ENCODE measurements at regions of chr1 and their contacts with region 1.

Region 1: GRCh38 chr1:42173155-42173933 is 8.8 kb upstream of the GUCA2A start:
- DNase-seq: peak; percentile 35
- H3K4me3 ChIP-seq: peak overlapping the region in 2 of 3 experiments; percentile 0 to 7
- H3K27ac ChIP-seq: peak overlapping the region; percentile 66
- H3K4me1 ChIP-seq: peaks cover 56% of the 10 kb centered on the region
- H3K27me3 ChIP-seq: no peaks in the 10 kb centered on the region
- CTCF ChIP-seq: peak; percentile 96 to 99

Region 2: GRCh38 chr1:41516168-41517061 is 656.9 kb before region 1 on chr1:
- CTCF ChIA-PET with region 1: no interaction called
- dilution Hi-C with region 1: no loop called
- in situ Hi-C with region 1: no loop called
- intact Hi-C with region 1: loop called (anchors 5 kb)
- DNase-seq: peak; percentile 71
- H3K4me3 ChIP-seq: peak overlapping the region in 2 of 3 experiments; percentile 18 to 38
- H3K27ac ChIP-seq: no peak overlapping the region
- H3K4me1 ChIP-seq: peaks cover 23% of the 10 kb centered on the region
- H3K27me3 ChIP-seq: no peaks in the 10 kb centered on the region
- CTCF ChIP-seq: peak; percentile 69 to 91

Region 3: GRCh38 chr1:41812051-41812450 is 361.3 kb before region 1 on chr1:
- CTCF ChIA-PET with region 1: interaction called, 4 read pairs
- dilution Hi-C with region 1: no loop called
- in situ Hi-C with region 1: no loop called
- intact Hi-C with region 1: loop called (anchors 1 kb)
- DNase-seq: peak; percentile 59
- H3K4me3 ChIP-seq: no peak overlapping the region
- H3K27ac ChIP-seq: no peak overlapping the region
- H3K4me1 ChIP-seq: peaks cover 3% of the 10 kb centered on the region
- H3K27me3 ChIP-seq: no peaks in the 10 kb centered on the region
- CTCF ChIP-seq: peak; percentile 77 to 82

Region 4: DNA sequence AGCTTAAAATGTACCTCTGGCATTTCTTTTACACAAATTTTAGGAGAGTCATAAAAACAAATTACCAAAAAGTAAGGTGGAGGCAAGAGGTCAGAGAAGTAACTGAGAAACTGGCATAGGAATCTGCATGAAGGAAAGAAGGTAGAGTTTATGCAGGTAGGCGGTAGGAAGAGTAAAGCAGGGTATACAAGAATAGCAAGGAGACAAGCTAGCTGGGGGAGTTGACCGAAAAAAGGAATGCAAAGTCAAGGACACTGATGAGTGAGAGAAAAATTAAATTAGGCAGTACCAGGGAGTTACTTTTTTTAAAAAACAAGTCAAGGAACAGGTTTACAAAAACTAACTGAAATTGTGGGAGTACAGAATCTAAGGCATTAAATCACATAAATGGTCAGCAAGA is 105.7 kb after region 1 on chr1:
- CTCF ChIA-PET with region 1: no interaction called
- dilution Hi-C with region 1: loop called (anchors 5 kb)
- in situ Hi-C with region 1: no loop called
- intact Hi-C with region 1: no loop called
- DNase-seq: no peak
- H3K4me3 ChIP-seq: no peak overlapping the region
- H3K27ac ChIP-seq: no peak overlapping the region
- H3K4me1 ChIP-seq: peaks cover 14% of the 10 kb centered on the region
- H3K27me3 ChIP-seq: no peaks in the 10 kb centered on the region
- CTCF ChIP-seq: no peak

Region 5: DNA sequence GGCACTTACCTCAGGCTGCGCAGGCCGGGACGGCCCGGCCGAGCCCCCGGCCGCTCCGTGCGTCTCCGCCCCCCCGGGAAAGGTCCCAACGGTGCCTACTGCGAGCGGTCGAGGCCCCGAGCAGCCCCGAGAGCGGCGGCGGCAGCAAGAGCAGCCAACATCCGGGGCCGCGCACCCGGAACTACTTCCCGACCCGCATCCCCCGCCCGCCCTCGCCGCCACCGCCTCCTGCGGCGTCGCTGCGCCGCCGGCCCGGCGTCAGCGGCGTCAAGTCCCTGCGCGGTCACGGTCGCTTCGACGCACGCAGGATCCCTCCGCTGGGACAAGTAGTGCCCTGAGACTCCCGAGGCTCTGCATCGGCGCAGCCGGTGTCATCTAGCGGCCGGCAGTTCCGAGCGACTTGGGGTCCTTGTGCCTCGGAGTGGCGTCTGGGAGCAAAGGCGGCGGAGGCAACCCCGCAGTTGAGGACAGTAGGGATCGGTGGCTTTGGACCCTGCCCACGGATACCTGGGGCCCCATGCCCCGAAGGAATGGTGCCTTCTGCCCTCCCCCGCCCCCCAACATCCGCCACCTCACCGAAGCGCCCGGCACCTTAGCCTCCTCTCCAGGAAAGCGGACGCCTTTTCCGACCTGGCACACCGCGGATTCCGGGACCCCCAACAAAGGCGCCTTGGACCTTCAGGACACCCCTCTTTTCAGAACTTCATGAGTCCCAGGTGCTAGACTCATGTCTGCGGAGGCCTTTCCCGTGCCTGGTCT is 161.9 kb after region 1 on chr1 and contains the start of gene FOXJ3:
- CTCF ChIA-PET with region 1: interaction called, 3 read pairs
- dilution Hi-C with region 1: no loop called
- in situ Hi-C with region 1: no loop called
- intact Hi-C with region 1: loop called (anchors 1 kb)
- DNase-seq: peak; percentile 94
- H3K4me3 ChIP-seq: peak within 1 kb of the TSS; percentile 90 to 99 (median 95)
- H3K27ac ChIP-seq: peak within 1 kb of the TSS; percentile 83
- H3K4me1 ChIP-seq: peaks cover 13% of the 10 kb centered on the region
- H3K27me3 ChIP-seq: no peaks in the 10 kb centered on the region
- CTCF ChIP-seq: peak in 1 of 2 donors; percentile 12
- total RNA-seq, gene FOXJ3: 40.8 to 43.1 TPM

Region 6: DNA sequence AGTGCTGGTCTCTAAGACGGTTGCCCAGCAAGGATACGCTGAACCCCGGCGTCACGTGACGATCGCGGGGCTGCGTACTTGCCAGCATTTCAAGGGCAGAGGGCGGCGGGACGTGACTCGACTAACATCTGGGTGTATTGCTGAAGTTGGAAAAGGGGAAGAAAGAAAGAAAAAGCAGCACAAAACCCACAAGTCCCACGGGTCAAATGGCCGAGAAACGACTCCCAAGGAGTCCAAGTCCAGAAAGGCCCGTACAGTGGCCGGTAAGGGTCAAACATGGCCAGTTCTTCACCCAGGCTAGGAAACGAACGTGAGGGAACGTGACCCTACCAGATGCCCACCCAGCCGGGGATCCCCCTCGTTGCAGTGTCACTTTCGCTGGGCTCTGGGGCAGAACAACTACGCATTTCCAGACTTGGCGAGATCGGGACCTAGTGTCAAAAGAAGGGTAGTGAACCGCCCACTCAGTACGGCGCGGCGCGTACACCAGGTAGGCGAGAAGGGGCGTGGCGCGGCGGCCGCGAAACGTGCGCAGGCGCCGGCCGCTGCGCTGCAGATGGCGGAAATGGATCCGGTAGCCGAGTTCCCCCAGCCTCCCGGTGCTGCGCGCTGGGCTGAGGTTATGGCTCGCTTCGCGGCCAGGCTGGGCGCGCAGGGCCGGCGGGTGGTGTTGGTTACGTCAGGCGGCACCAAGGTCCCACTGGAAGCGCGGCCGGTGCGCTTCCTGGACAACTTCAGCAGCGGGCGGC is 282.8 kb after region 1 on chr1 and contains the starts of genes PPCS and ZMYND12:
- CTCF ChIA-PET with region 1: no interaction called
- dilution Hi-C with region 1: no loop called
- in situ Hi-C with region 1: no loop called
- intact Hi-C with region 1: loop called (anchors 1 kb)
- DNase-seq: peak; percentile 86
- H3K4me3 ChIP-seq: peak within 1 kb of the TSS; percentile 63 to 72 (median 72)
- H3K27ac ChIP-seq: peak within 1 kb of the TSS; percentile 67
- H3K4me1 ChIP-seq: peaks cover 8% of the 10 kb centered on the region
- H3K27me3 ChIP-seq: no peaks in the 10 kb centered on the region
- CTCF ChIP-seq: peak in 1 of 2 donors; percentile 33
- total RNA-seq, gene PPCS: 51.9 to 73.0 TPM
- total RNA-seq, gene ZMYND12: 1.0 TPM in 1 of 2 donors, not detected in the other

Region 7: DNA sequence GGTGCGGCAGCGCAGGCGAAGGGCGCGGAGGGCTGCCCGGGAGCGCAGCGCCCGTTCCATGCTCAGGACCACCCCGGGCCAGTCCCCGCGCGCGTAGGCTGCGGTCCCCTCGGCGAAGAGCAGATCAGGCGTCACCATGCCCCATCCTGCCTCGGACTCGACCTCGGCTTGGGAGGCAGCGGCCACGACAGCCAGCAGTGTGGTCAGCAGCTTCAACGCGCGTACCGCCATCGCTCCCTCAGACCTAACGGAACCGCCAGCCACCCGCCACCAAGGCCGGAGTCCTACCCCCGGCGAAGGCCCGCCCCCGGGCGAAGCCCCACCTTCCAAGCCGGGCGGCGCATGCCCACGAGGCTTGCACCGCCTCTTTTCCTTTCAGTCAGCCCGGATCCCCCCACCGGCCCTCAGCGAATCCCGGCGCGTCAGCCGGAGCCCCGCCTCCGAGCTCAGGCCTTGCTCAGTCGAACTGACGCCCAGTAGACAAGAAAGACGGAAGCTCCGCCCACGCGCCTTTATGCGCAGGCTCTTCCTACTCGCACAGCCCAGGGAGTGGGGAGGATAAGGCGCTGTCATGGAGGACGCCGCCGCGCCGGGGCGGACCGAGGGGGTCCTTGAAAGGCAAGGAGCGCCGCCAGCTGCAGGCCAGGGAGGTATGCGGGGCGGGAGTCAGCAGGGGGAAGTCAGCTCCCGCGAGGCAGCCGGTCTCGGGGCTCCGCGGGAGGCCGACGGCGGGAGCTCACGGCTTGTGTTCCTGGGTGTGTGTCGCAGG is 593.6 kb after region 1 on chr1 and contains the starts of genes C1orf50 and P3H1:
- CTCF ChIA-PET with region 1: no interaction called
- dilution Hi-C with region 1: no loop called
- in situ Hi-C with region 1: no loop called
- intact Hi-C with region 1: no loop called
- DNase-seq: peak; percentile 99
- H3K4me3 ChIP-seq: peak within 1 kb of the TSS; percentile 60 to 89 (median 83)
- H3K27ac ChIP-seq: peak within 1 kb of the TSS; percentile 49
- H3K4me1 ChIP-seq: peaks cover 15% of the 10 kb centered on the region
- H3K27me3 ChIP-seq: no peaks in the 10 kb centered on the region
- CTCF ChIP-seq: no peak
- total RNA-seq, gene C1orf50: 4.0 to 11.0 TPM
- total RNA-seq, gene P3H1: 40.1 to 44.0 TPM